Activated T-helper 1 cell treated with anti-CD3 and anti-CD28 coated beads, Interleukin-12 subunit alpha, Interleukin-12 subunit beta, Interleukin-2, Interleukin-4 antibody, amounts not matched to agents 30 ng/mL and 10 ng/mL and 1 ng/mL, durations not matched to agents 14 hours and 24 hours and 36 hours (primary cell): ENCODE measurements at regions of chr2 and their contacts with region 1.

Region 1: GRCh38 chr2:218908721-218909619 is 28.3 kb downstream of the WNT10A start:
- DNase-seq: peak; percentile 78
- H3K4me3 Mint-ChIP-seq: peak overlapping the region; percentile 79
- H3K27ac Mint-ChIP-seq: peak overlapping the region; percentile 78
- H3K4me1 Mint-ChIP-seq: peaks cover 18% of the 10 kb centered on the region
- H3K27me3 Mint-ChIP-seq: peaks cover 28% of the 10 kb centered on the region

Region 2: DNA sequence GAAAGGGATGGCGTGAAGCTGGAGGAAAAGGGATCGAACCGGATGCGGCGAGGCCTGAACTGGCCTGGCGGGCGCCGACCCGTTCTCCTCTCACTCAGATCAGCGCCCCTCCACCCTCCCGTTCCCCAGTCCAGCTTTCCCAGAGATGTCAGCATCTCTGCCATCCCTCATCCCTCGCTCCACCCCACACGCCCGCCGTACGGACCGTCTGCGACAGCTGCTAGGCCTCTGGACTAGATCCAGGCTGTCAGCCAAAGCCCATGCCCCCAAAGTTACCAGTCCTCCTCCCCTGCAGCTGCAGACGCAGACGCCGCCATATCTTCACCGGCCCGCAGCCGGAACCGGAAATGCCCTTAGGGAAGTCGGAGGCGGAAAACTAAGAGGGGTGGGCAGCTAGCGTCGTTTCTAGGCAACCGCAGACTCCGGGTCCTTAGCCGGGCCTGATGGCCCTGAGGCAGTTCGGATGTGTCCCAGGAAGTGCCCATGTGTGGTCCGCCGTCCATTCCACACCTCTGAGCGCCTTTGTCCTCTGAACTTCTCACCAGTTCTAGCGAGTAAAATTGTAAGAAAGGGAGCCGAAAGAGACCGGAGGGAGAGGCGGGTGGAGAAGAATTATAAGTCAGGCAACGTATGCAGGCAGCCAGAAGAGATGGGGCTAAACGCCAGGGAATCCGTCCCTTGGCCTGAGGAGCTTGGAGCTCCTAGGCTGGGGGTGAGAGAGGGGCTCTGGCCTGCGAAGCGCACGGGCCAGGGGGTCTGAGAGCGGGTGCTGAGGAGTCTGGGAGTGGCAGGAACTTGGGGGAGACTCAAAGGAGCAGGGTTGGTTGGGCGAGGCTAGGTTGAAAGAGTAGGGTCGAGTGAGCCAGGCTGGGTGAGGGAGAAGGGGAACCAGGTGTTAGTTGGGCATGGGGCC is 237.1 kb before region 1 on chr2 and contains the starts of genes RNF25 and STK36:
- intact Hi-C with region 1: loop called (anchors 2 kb)
- DNase-seq: peak; percentile 77
- H3K4me3 Mint-ChIP-seq: peak within 1 kb of the TSS; percentile 100
- H3K27ac Mint-ChIP-seq: peak within 1 kb of the TSS; percentile 93
- H3K4me1 Mint-ChIP-seq: peaks cover 22% of the 10 kb centered on the region
- H3K27me3 Mint-ChIP-seq: no peaks in the 10 kb centered on the region
- total RNA-seq, gene RNF25: 29.1 and 31.6 TPM in 2 replicates
- total RNA-seq, gene STK36: 15.9 TPM in 2 replicates

Region 3: DNA sequence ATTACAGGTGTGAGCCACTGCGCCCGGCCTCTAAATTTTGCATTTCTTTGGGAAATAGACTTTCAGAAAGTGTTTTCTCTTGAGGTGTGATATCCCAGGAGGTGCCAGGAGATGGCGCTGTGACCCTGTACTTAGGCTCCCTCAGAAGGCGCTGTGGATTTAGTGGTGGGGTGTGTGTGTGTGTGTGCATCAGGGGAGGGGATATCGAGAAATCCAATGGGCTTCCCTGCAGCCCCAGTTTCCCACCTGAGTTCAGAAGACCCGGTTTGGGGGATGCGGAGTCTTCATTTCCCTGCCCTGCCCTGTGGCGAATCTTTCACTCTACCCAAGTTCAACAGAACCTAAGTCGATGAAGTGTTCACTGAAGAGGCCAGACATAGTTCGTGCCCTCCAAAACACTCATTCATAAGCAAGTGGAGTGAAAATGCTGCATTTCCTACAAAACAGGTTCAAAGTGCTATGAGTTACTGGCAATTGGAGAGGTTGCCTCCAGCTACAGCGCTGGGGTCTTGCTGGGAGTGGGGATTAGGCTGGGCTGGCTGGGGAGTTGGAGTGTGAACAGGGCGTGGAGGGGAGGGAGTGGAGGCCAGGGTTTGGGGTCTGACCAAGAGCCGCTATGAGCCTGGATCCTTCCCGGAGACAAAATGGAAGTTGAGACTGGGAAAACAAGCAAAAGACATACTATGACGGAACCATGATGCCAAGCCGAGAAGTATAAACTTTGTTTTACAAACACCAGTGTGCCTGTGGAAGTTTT is 55.9 kb before region 1 on chr2:
- intact Hi-C with region 1: loop called (anchors 2 kb)
- DNase-seq: peak; percentile 18
- H3K4me3 Mint-ChIP-seq: no peak overlapping the region
- H3K27ac Mint-ChIP-seq: no peak overlapping the region
- H3K4me1 Mint-ChIP-seq: no peaks in the 10 kb centered on the region
- H3K27me3 Mint-ChIP-seq: peaks cover 63% of the 10 kb centered on the region